ENCODE measurements at regions of chr15 and their contacts with region 1.

Region 1: DNA sequence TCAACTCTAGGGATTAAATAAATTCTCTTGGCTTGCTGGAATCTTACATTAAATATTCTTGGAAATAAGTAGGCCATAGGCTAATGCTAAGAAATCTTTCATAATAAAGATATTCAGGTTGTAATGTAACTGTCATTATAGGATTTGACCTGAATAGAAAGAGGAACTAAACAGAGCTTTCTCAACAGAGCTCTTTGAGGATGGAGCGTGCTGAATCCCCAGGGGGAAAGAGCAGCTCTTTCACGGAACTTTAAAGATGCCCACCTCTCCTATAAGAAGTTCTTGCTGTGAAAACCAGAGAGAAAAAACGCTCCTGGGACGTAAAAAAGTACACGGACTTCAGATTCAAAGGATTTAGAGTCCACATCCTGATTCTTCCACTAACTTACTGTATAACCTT is 77.9 kb downstream of the NTRK3 start:
- DNase-seq: no peak

Region 2: GRCh38 chr15:87829332-87830050 is 349.1 kb before region 1 on chr15:
- intact Hi-C with region 1: loop called in 1 of 2 experiments (anchors 5 kb)
- DNase-seq: no peak

Region 3: DNA sequence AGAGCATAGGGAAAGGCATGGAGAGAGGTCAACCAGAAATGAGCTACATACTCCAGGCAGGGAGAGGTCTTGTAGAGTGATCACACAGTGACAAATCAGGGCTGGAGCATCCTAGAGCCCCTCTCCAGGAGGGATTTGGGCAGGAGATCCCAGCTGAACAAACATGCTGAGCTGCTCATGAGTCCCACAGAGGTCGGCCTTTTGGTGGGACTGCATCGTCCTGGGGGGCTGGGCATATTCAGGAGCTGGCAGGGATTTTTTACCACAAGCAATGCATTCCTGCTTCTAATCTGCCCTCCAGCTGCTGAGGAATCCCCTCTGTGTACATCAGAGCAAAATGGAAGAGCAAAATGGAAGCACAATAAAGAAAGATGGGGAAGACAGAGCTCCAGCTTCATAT is 17.0 kb before region 1 on chr15:
- intact Hi-C with region 1: loop called in 1 of 2 experiments (anchors 1 kb)
- DNase-seq: no peak